ENCODE measurements at regions of chr10 and their contacts with region 1.

Region 1: GRCh38 chr10:43420369-43421200 is 11.6 kb upstream of the HNRNPF start:
- DNase-seq: peak; percentile 76
- CTCF ChIP-seq: peak; percentile 41

Region 2: DNA sequence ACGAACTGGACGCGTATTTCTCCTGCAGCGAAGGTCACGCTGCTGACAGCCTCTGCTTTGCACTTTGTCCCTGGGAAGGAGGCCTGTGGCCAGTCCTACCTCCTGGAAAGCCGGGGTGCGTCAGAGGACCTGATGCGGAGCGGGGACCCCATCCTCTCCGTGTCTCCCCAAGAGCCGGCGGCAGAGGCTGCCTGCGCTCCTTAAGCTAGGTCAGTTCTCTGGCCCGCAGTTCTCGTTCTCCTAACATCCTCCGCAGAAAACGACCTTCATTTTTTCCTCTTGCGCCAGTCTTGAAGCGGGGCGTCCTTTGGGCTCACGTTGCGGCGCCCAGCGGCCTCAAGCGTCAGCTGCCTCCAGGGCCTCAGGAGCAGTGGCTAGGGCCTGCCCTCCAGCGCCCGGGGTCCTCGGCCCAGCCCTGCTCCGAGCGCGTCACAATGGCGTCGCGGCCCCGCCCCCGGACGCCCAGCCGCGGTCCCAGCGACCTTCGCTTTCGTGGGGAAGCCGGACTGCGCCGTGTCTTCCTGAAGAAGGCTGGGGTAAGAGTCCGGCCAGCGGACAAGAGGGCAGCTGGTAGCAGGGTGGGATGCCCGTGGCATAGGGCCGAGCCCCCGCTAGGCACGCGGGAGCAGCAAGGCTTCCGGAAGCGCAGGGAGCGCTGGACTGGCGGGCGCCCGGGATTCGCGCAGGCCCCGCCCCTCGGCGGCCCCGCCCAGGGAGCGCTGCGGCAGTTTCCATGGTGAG is 16.0 kb after region 1 on chr10 and contains the start of gene ZNF487:
- CTCF ChIA-PET with region 1: interaction called, 10 read pairs
- POLR2A ChIA-PET with region 1: interaction called, 3 read pairs
- DNase-seq: peak; percentile 95
- CTCF ChIP-seq: peak; percentile 36